Esophagus muscularis mucosa (tissue), 4 donors: ENCODE measurements at regions of chr5 and their contacts with region 1.

Region 1: GRCh38 chr5:140639148-140639979 is at the start of gene TMCO6:
- DNase-seq: peak; percentile 99
- H3K4me3 ChIP-seq: peak within 1 kb of the TSS; percentile 74 to 88 (median 76)
- H3K27ac ChIP-seq: peak within 1 kb of the TSS; percentile 87 to 96 (median 90)
- H3K4me1 ChIP-seq: peaks cover 16 to 32% (median 28%) of the 10 kb centered on the region in 4 donors
- H3K27me3 ChIP-seq: no peaks in the 10 kb centered on the region
- CTCF ChIP-seq: peak; percentile 42 to 77 (median 49)
- EP300 ChIP-seq: peak; percentile 41
- POLR2A ChIP-seq: no peak
- total RNA-seq, gene TMCO6: 14.0 to 41.4 (median 22.2) TPM

Region 2: GRCh38 chr5:140481758-140482157 is 157.6 kb before region 1 on chr5:
- intact Hi-C with region 1: no loop called
- DNase-seq: no peak
- H3K4me3 ChIP-seq: no peak overlapping the region
- H3K27ac ChIP-seq: no peak overlapping the region
- H3K4me1 ChIP-seq: peaks cover 2 to 16% (median 11%) of the 10 kb centered on the region in 4 donors
- H3K27me3 ChIP-seq: no peaks in the 10 kb centered on the region
- CTCF ChIP-seq: no peak
- EP300 ChIP-seq: no peak
- POLR2A ChIP-seq: no peak

Region 3: DNA sequence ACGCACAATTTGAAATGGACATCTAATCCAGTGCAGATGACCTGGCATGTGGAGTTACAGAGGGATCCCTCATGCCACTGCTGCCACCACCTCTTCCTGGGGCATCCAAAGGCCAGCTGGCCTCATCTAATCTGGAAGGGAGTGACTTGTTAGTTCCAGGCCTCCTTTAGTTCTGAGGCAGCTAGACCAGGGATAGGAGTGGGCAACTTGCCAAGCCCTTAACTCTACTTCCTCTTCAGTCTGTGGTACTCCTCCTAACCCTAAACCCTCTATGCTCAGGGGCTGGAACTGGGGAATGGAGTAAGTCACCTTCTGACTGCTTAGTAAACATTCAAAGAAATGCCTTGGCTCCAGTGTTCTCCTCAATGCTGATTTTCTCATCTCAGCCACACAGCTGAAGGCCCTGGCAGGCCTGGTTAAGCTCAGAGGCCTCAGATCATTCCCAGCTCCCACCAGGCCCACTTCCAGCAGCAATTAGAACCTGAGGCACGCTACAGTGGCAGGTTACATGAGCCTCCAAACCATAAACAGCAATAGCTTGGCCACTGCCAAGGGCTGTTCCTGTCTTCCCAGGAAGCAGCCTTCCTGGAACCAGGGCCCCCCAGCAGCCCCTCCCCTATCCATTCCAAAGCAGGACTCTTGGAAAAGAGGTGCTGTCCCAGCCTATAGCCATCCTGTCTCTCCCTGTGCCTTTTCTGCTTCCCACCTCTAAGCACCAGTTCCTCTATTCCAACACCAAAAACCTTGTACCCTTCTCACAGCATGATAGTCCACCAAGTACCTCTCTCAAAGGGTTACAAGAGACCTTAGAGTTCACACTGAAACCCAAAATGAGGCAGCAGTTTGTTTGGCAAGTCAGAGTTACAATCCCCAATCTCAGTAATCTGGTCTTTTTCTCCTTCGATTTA is 89.9 kb before region 1 on chr5:
- intact Hi-C with region 1: loop called (anchors 5 kb)
- DNase-seq: peak; percentile 91
- H3K4me3 ChIP-seq: no peak overlapping the region
- H3K27ac ChIP-seq: peak overlapping the region; percentile 93 to 98 (median 96)
- H3K4me1 ChIP-seq: peaks cover 49 to 58% (median 56%) of the 10 kb centered on the region in 4 donors
- H3K27me3 ChIP-seq: no peaks in the 10 kb centered on the region
- CTCF ChIP-seq: no peak
- EP300 ChIP-seq: peak; percentile 45
- POLR2A ChIP-seq: peak; percentile 3

Region 4: DNA sequence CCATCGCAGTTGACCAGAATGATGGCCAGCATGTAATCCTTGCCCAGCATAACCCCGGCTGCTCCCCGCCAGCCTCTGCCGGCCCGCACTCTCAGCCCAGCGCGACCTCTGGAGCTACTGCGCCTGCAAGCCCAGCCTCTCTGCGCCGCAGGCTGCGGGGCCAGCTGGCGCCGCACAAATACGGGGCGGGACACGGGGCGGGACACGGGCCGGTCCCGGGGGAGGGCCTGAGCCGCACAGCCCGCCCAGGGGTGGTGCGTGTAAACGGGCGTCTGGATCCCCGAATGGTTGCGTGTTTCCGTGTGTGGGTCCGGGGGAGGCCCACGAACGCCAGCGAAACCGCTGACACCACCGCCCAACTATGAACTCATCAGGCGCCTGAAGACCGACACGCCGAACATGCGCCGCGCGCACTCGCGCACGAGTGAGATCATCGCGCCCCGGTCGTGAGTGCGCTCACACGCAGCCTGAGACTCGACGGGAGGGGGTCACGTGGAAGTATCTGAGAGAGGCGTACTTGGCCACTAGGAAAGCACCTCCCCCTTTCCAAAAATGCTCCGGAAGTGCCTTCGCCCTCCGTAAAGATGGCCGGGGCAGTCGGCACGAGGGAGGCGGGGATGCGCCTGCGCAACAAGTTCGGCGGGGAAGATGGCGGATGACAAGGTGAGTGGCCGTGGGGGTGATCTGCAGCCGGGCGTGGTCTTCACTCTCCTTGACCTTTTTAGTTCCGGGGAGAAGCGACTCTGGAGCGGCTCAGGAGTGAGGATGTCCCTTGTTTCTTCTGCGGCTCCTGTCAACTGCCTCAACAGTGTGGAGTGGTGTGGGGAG is 75.0 kb before region 1 on chr5 and contains the starts of genes APBB3 and SLC35A4:
- intact Hi-C with region 1: loop called (anchors 5 kb)
- DNase-seq: peak; percentile 99
- H3K4me3 ChIP-seq: peak within 1 kb of the TSS; percentile 68 to 96 (median 74)
- H3K27ac ChIP-seq: peak within 1 kb of the TSS; percentile 90 to 94 (median 92)
- H3K4me1 ChIP-seq: peaks cover 49 to 73% (median 63%) of the 10 kb centered on the region in 4 donors
- H3K27me3 ChIP-seq: no peaks in the 10 kb centered on the region
- CTCF ChIP-seq: peak in 1 of 3 experiments; percentile 21
- EP300 ChIP-seq: peak; percentile 49
- POLR2A ChIP-seq: peak; percentile 56
- total RNA-seq, gene APBB3: 6.8 to 12.5 (median 11.8) TPM
- total RNA-seq, gene SLC35A4: 27.8 to 45.1 (median 36.6) TPM